ENCODE measurements at regions of chr11 and their contacts with region 1.

Region 1: GRCh38 chr11:3841426-3842350 is 929 bp upstream of the RHOG start:
- DNase-seq: peak; percentile 91
- H3K4me3 Mint-ChIP-seq: peak overlapping the region; percentile 77
- H3K27ac Mint-ChIP-seq: peak overlapping the region; percentile 88
- H3K4me1 Mint-ChIP-seq: peaks cover 54% of the 10 kb centered on the region
- H3K27me3 Mint-ChIP-seq: no peaks in the 10 kb centered on the region

Region 2: GRCh38 chr11:3797329-3798095 is 44.2 kb before region 1 on chr11 and contains the start of gene NUP98:
- intact Hi-C with region 1: loop called (anchors 2 kb)
- DNase-seq: peak; percentile 100
- H3K4me3 Mint-ChIP-seq: peak within 1 kb of the TSS; percentile 98
- H3K27ac Mint-ChIP-seq: peak within 1 kb of the TSS; percentile 95
- H3K4me1 Mint-ChIP-seq: peaks cover 33% of the 10 kb centered on the region
- H3K27me3 Mint-ChIP-seq: no peaks in the 10 kb centered on the region
- total RNA-seq, gene NUP98: 123 and 131 TPM in 2 replicates

Region 3: GRCh38 chr11:3824714-3825472 is 16.8 kb before region 1 on chr11:
- intact Hi-C with region 1: loop called (anchors 1 kb)
- DNase-seq: peak; percentile 67
- H3K4me3 Mint-ChIP-seq: no peak overlapping the region
- H3K27ac Mint-ChIP-seq: peak overlapping the region; percentile 48
- H3K4me1 Mint-ChIP-seq: peaks cover 24% of the 10 kb centered on the region
- H3K27me3 Mint-ChIP-seq: no peaks in the 10 kb centered on the region

Region 4: DNA sequence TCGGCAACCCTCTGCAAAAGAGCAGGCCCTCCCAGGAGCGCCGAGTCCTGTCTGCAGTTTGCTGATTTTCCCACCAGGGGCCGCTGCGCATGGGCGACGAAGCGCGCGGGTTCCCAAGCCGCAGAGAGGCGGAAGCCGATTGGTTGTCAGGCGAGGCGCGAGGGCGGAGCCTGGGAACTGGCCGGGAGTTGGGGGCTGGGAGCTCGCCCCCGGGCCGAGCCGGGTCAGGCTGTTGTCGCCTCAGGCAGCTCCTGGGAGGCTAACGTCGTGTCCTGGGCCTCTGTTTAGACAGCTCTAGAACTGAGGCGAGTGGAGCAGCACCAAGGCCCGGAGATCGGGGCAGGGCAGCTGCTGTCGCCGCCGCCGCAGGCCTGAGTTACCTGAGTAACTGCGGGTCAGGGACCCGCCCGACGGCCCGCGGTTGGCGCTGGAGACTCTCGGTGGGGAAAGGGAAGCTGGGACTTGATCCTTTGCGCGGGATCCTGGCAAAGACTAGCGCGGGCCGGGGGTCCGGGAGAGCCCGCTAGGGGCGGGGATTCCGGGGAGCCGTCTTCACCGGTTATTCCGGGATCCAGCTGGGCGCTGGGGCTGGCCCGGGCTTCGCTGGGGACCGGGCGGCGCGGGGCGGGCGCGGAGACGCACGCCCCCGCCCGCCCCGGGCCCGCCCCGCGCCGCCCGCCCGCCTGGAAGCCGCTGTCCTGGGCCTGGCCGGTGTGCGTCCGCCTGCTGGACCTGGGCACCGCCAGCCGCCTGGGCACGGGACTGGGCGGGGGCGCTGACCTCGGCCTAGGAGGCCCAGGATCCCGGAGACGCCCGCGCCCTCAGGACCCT is 13.5 kb after region 1 on chr11 and contains the start of gene STIM1:
- intact Hi-C with region 1: loop called (anchors 1 kb)
- DNase-seq: peak; percentile 98
- H3K4me3 Mint-ChIP-seq: peak within 1 kb of the TSS; percentile 99
- H3K27ac Mint-ChIP-seq: peak within 1 kb of the TSS; percentile 96
- H3K4me1 Mint-ChIP-seq: peaks cover 52% of the 10 kb centered on the region
- H3K27me3 Mint-ChIP-seq: no peaks in the 10 kb centered on the region
- total RNA-seq, gene STIM1: 77.6 and 78.0 TPM in 2 replicates

Region 5: GRCh38 chr11:3861683-3862082 is 20.0 kb after region 1 on chr11:
- intact Hi-C with region 1: loop called (anchors 1 kb)
- DNase-seq: no peak
- H3K4me3 Mint-ChIP-seq: peak overlapping the region; percentile 99
- H3K27ac Mint-ChIP-seq: peak overlapping the region; percentile 91
- H3K4me1 Mint-ChIP-seq: peaks cover 80% of the 10 kb centered on the region
- H3K27me3 Mint-ChIP-seq: no peaks in the 10 kb centered on the region

Region 6: GRCh38 chr11:4094348-4095291 is 252.9 kb after region 1 on chr11 and contains the start of gene RRM1:
- intact Hi-C with region 1: loop called (anchors 1 kb)
- DNase-seq: peak; percentile 92
- H3K4me3 Mint-ChIP-seq: peak within 1 kb of the TSS; percentile 94
- H3K27ac Mint-ChIP-seq: peak within 1 kb of the TSS; percentile 88
- H3K4me1 Mint-ChIP-seq: peaks cover 75% of the 10 kb centered on the region
- H3K27me3 Mint-ChIP-seq: no peaks in the 10 kb centered on the region
- total RNA-seq, gene RRM1: 142 and 146 TPM in 2 replicates